WTC11 (cell line): ENCODE measurements at regions of chr12 and their contacts with region 1.

Region 1: DNA sequence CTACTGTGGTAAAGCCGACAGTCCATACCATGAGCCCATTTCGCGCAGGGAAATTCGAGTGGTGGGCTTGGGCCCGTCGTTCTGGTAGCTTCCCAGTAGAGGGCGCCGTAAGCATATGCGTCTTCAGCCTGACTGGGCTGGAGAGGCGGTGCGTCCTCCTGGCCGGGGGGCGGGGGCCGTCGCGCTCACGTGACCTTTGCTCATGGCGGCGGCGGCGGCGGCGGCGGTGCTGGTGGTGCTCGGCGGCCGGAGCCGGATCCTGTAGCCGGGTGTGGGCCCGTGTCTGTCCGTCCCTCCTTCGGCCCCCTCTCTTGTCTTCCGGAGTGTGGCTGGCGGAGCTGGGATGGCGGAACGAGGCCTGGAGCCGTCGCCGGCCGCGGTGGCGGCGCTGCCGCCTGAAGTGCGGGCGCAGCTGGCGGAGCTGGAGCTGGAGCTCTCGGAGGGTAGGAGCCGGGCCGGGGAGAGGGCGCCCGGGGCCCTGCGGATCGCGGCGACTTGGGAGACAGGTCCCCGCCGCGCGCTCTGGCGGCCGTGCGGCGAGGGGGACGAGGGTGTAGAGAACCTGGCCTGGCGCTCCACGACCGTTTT is at the start of gene DIP2B:
- DNase-seq: peak; percentile 98
- ATAC-seq: peak; percentile 91
- H3K4me3 Mint-ChIP-seq: peak within 1 kb of the TSS; percentile 88
- H3K27ac Mint-ChIP-seq: peak within 1 kb of the TSS; percentile 53; the same call in 1 of the 2 replicates
- H3K4me1 Mint-ChIP-seq: peaks cover 31% of the 10 kb centered on the region
- H3K27me3 Mint-ChIP-seq: no peaks in the 10 kb centered on the region
- CTCF ChIP-seq: peak; percentile 84
- total RNA-seq, gene DIP2B: 20.6 to 26.1 TPM (median 22.0 TPM) in 3 replicates

Region 2: DNA sequence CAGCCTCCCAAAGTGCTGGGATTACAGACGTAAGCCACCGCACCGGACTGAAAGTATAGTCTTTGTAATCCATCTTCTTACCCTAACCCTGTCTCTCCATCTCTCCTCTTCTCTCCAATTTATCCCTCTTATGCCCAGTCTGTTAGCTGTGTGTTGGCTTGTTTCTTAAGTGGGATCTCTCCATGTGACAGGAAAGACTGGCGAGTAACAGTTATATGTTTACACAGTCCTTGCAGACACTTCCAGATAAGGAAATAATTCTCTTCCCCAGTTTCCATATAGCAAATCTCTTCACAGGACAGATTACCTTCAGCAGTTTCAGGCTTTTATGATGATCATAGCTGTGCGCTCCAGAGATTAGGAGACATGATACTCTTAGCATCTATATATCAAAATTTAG is 16.1 kb before region 1 on chr12:
- CTCF ChIA-PET with region 1: no interaction called
- POLR2A ChIA-PET with region 1: no interaction called
- DNase-seq: no peak
- ATAC-seq: no peak
- H3K4me3 Mint-ChIP-seq: no peak overlapping the region
- H3K27ac Mint-ChIP-seq: no peak overlapping the region
- H3K4me1 Mint-ChIP-seq: no peaks in the 10 kb centered on the region
- H3K27me3 Mint-ChIP-seq: peaks cover 3% of the 10 kb centered on the region
- CTCF ChIP-seq: no peak

Region 3: GRCh38 chr12:50537538-50537919 is 32.6 kb after region 1 on chr12:
- CTCF ChIA-PET with region 1: interaction called, 20 read pairs
- POLR2A ChIA-PET with region 1: no interaction called
- DNase-seq: no peak
- ATAC-seq: no peak
- H3K4me3 Mint-ChIP-seq: no peak overlapping the region
- H3K27ac Mint-ChIP-seq: peak overlapping the region; percentile 95
- H3K4me1 Mint-ChIP-seq: peaks cover 30% of the 10 kb centered on the region
- H3K27me3 Mint-ChIP-seq: no peaks in the 10 kb centered on the region
- CTCF ChIP-seq: no peak

Region 4: DNA sequence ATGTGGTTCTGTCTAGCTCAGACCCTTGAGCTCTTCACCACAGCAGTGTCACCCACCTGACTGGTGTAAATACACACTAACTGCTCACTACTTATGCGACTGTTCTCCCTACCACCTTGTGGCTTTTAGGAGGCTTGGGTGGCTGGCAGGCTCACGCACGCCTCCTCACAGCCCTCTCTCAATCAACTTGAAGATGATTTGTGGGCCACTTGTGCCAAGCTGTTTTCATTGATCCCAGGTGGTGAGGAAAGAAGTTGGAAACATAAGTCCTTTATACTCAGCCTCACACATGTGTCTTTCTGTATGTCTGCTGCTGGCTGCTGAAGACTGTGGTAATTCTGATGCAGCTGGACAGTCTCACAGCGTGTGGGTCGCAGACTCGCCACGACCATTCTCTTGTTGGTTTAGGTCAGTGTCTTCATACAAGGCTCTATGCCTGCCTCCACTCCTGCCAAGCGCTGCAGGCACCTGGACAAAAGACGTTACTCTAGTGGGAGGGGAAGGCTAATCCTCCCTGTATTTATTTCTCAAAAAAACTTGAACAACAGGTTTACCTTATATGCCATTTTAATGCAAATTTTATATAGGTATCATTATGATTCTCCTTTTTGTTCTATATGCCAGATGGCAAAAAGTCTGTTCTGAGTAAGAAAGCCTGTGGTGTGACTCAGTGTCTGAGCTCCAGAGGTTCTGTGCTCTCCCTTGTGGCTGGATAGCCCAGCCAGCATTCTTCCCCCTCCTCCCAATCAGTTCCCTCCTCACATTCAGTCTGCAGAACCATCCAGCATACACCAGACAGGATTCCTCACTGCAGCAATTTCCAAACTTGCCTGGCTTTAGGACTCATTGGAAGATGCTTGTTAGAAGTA is 115.5 kb after region 1 on chr12:
- CTCF ChIA-PET with region 1: interaction called, 11 read pairs
- POLR2A ChIA-PET with region 1: no interaction called
- DNase-seq: no peak
- ATAC-seq: peak; percentile 80
- H3K4me3 Mint-ChIP-seq: no peak overlapping the region
- H3K27ac Mint-ChIP-seq: peak overlapping the region; percentile 97
- H3K4me1 Mint-ChIP-seq: peaks cover 52% of the 10 kb centered on the region
- H3K27me3 Mint-ChIP-seq: no peaks in the 10 kb centered on the region
- CTCF ChIP-seq: no peak

Region 5: DNA sequence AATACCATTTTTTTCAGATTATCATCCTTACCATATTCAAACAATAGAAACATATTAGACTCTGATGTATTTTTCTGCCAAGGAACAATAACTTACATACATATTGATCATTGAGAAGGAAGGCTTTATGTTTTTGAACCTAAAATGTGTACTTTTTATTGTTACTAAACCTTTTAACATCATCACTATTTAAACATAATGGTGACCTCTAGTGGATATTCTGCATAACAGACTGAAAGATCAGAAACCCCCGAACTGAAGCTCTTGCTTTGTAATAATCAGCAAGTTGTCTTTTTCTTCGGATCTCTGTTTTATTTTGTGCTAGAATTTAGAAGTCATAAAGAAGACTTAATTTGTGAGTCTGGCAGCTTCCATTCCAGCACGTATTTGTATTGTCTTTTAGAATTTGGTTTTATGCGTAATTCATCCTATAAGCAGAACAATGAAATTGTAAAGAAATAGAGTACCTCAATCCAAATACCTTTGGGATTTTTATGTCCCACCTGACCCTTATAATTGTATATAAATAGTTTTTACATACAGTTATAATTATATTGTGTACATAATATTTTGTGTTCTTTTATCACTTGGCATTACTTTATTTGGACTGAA is 133.1 kb after region 1 on chr12:
- CTCF ChIA-PET with region 1: interaction called, 41 read pairs
- POLR2A ChIA-PET with region 1: interaction called, 3 read pairs
- DNase-seq: no peak
- ATAC-seq: no peak
- H3K4me3 Mint-ChIP-seq: no peak overlapping the region
- H3K27ac Mint-ChIP-seq: peak overlapping the region; percentile 47; the same call in 1 of the 2 replicates
- H3K4me1 Mint-ChIP-seq: peaks cover 26% of the 10 kb centered on the region
- H3K27me3 Mint-ChIP-seq: no peaks in the 10 kb centered on the region
- CTCF ChIP-seq: peak; percentile 36

Region 6: DNA sequence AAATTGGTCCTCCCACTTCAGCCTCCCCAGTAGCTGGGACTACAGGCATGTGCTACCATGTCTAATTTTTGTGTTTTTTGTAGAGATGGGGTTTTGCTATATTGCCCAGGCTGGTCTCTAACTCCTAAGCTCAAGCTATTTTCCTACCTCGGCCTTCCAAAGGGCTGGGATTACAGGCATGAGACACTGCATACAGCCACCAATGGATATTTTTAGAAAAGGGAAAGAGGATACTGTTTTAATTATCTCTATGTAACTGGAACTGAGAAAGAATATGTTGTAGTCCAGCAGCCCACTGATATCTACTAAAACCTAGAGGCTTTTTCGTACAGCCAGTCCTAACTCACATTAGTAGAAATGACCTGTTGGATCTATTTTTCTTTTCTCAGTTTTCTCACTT is 344.1 kb after region 1 on chr12:
- CTCF ChIA-PET with region 1: no interaction called
- POLR2A ChIA-PET with region 1: no interaction called
- DNase-seq: no peak
- ATAC-seq: no peak
- H3K4me3 Mint-ChIP-seq: no peak overlapping the region
- H3K27ac Mint-ChIP-seq: no peak overlapping the region
- H3K4me1 Mint-ChIP-seq: no peaks in the 10 kb centered on the region
- H3K27me3 Mint-ChIP-seq: no peaks in the 10 kb centered on the region
- CTCF ChIP-seq: no peak